ENCODE measurements at regions of chr1 and their contacts with region 1.

Region 1: DNA sequence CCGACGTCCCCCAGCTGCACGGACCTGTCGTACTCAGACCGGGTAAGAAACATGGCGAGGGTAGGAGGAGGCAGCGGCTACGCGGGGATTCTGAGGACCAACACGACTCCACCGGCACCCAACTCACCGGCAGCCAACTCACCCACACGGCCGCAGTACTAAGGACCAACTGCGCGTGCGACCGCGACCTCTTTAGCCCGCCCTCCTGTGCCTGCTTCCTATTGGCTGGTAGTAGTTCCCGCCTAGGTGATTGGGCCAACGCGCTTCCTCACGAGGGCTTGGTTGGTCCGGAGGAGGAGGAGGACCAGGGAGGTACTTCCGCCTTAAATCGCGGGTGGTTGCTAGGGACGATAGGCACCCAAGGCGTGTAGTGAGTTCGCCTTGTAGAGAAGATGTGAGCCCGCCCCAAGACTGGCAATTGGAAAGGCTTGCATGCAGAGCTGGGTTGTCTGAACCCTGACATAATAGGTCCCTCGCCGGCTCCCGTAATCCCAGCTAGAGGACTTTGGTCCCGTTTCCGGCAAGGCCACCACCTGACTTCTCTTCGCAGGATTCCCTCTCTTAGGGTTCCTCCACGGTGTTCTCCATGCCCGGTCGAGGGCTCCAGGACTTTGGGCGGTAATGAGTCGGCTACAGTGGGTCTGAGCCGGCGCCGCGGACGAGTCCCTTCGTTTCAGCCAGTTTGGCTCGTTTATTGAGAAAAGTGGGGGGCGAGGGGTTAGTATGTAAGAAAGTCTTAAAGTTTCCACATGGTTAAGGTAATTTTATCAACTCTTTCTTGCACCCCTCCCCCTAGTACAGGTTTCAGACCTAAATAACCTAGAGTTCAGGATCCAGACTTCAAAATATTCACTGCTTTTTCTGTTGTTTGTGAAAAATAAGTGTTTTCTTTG is at the start of gene PSMA5:
- DNase-seq: peak; percentile 97
- ATAC-seq: peak; percentile 95
- H3K4me3 ChIP-seq: peak within 1 kb of the TSS; percentile 72 to 98 (median 79)
- H3K4me3 Mint-ChIP-seq: peak within 1 kb of the TSS; percentile 98
- H3K27ac ChIP-seq: peak within 1 kb of the TSS; percentile 71 to 82
- H3K27ac Mint-ChIP-seq: peak within 1 kb of the TSS; percentile 98
- H3K4me1 ChIP-seq: peaks cover 13 to 19% of the 10 kb centered on the region in 2 donors
- H3K4me1 Mint-ChIP-seq: peaks cover 33% of the 10 kb centered on the region
- H3K27me3 ChIP-seq: no peaks in the 10 kb centered on the region
- H3K27me3 Mint-ChIP-seq: no peaks in the 10 kb centered on the region
- CTCF ChIP-seq: no peak
- total RNA-seq, gene PSMA5: 58.3 and 62.9 TPM in 2 replicates

Region 2: GRCh38 chr1:108963052-108963686 is 463.4 kb before region 1 on chr1 and contains the start of gene CLCC1:
- CTCF ChIA-PET with region 1: no interaction called
- POLR2A ChIA-PET with region 1: no interaction called
- intact Hi-C with region 1: loop called (anchors 2 kb)
- DNase-seq: peak; percentile 97
- ATAC-seq: peak; percentile 91
- H3K4me3 ChIP-seq: peak within 1 kb of the TSS; percentile 56 to 94 (median 76)
- H3K4me3 Mint-ChIP-seq: peak within 1 kb of the TSS; percentile 91
- H3K27ac ChIP-seq: peak within 1 kb of the TSS; percentile 86 to 94
- H3K27ac Mint-ChIP-seq: peak within 1 kb of the TSS; percentile 95
- H3K4me1 ChIP-seq: peaks cover 16 to 17% of the 10 kb centered on the region in 2 donors
- H3K4me1 Mint-ChIP-seq: peaks cover 30% of the 10 kb centered on the region
- H3K27me3 ChIP-seq: no peaks in the 10 kb centered on the region
- H3K27me3 Mint-ChIP-seq: no peaks in the 10 kb centered on the region
- CTCF ChIP-seq: no peak
- total RNA-seq, gene CLCC1: 26.9 and 29.5 TPM in 2 replicates

Region 3: DNA sequence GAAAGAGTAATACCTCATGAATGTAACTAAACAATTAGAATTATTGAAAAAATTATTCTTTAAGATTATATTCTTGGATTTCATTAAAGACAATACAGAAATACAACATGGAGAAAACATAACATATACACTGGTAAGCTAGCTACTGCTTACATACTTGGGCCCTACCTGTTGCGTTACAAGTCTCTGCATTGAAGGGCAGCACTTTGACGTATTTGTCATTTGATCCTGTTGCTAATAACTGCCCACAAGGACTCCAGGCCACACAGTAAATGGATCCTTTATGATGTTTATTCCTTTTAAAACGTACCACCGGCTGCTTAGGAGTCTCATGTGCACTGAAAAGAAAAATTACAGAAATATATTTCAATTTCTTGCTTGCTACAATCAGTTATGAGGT is 443.4 kb before region 1 on chr1:
- CTCF ChIA-PET with region 1: no interaction called
- POLR2A ChIA-PET with region 1: no interaction called
- intact Hi-C with region 1: no loop called
- DNase-seq: no peak
- ATAC-seq: no peak
- H3K4me3 ChIP-seq: no peak overlapping the region
- H3K4me3 Mint-ChIP-seq: no peak overlapping the region
- H3K27ac ChIP-seq: no peak overlapping the region
- H3K27ac Mint-ChIP-seq: no peak overlapping the region
- H3K4me1 ChIP-seq: no peaks in the 10 kb centered on the region
- H3K4me1 Mint-ChIP-seq: no peaks in the 10 kb centered on the region
- H3K27me3 ChIP-seq: no peaks in the 10 kb centered on the region
- H3K27me3 Mint-ChIP-seq: no peaks in the 10 kb centered on the region
- CTCF ChIP-seq: no peak

Region 4: GRCh38 chr1:109248797-109249642 is 177.5 kb before region 1 on chr1 and contains the start of gene CELSR2:
- CTCF ChIA-PET with region 1: no interaction called
- POLR2A ChIA-PET with region 1: no interaction called
- intact Hi-C with region 1: loop called (anchors 1 kb)
- DNase-seq: peak; percentile 70
- ATAC-seq: peak; percentile 88
- H3K4me3 ChIP-seq: peak within 1 kb of the TSS in 3 of 5 experiments; percentile 37 to 54 (median 46)
- H3K4me3 Mint-ChIP-seq: peak within 1 kb of the TSS; percentile 78
- H3K27ac ChIP-seq: no peak within 1 kb of the TSS
- H3K27ac Mint-ChIP-seq: no peak within 1 kb of the TSS
- H3K4me1 ChIP-seq: peaks cover 11 to 22% of the 10 kb centered on the region in 2 donors
- H3K4me1 Mint-ChIP-seq: peaks cover 11% of the 10 kb centered on the region
- H3K27me3 ChIP-seq: peaks cover 0 to 45% (median 14%) of the 10 kb centered on the region in 4 experiments
- H3K27me3 Mint-ChIP-seq: peaks cover 17% of the 10 kb centered on the region
- CTCF ChIP-seq: no peak
- total RNA-seq, gene CELSR2: 2.7 and 2.9 TPM in 2 replicates

Region 5: DNA sequence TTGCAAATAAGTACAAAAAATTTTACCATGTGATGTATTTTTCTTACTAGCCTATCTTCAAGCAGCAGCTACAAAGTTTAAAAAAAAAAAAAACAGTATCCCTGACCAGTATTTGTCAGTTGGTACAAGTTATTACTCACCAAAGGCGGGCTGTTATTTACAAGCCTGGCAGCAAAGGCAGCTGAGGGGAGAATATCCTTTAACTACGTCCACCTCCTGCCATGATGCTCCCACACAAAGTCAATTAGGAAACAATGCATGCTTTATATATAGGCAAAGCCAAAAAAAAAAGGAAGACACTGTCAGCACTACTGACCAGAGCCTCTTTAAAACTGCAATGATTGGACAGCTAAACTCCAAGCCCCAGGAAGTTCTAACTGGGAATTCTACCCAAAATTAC is 14.0 kb before region 1 on chr1:
- CTCF ChIA-PET with region 1: no interaction called
- POLR2A ChIA-PET with region 1: no interaction called
- intact Hi-C with region 1: no loop called
- DNase-seq: no peak
- ATAC-seq: no peak
- H3K4me3 ChIP-seq: no peak overlapping the region
- H3K4me3 Mint-ChIP-seq: no peak overlapping the region
- H3K27ac ChIP-seq: no peak overlapping the region
- H3K27ac Mint-ChIP-seq: no peak overlapping the region
- H3K4me1 ChIP-seq: no peaks in the 10 kb centered on the region
- H3K4me1 Mint-ChIP-seq: peaks cover 2% of the 10 kb centered on the region
- H3K27me3 ChIP-seq: no peaks in the 10 kb centered on the region
- H3K27me3 Mint-ChIP-seq: no peaks in the 10 kb centered on the region
- CTCF ChIP-seq: no peak

Region 6: DNA sequence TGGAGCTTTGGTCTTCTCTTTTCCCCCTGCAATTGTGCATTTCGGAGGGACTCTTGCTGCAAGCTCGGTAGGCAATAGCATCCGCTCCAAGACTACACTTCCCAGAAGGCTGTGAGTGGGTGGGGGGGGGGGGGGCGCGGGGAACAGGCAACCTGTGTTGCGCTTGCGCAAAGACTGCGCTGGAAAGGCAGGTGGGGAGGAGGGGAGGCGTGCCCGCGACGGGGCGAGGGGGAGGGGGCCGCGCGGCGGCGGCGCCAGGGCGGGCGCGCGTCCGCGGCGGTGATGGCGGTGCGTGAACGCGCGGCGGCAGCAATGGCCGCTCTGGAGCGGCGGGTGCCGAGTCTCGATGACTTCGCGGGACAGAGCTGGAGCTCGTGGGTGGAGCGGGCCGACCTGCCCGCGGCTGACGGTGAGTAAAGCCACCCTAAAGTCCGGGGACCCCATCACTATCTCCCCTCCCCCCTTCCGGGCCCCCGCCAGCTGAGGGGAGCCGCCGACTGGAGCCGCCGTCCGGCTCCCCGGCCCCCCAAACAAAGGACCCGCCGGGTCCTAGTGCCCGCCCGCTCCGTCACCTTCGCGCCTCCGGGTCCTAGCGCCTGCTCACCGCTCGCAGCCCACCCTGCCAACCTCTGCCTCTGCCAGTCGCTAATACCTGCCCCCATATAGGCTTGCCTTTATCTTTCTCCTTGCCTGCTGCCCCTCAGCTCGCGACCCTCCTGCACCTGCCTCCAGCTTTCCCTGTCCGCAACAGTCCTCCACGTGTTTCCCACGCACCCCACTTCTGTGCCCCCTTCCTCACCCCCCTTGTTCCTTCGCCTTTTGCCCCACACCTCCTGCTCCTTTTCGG is 57.4 kb after region 1 on chr1 and contains the start of gene ATXN7L2:
- CTCF ChIA-PET with region 1: interaction called, 8 read pairs
- POLR2A ChIA-PET with region 1: interaction called, 5 read pairs
- intact Hi-C with region 1: loop called (anchors 1 kb)
- DNase-seq: peak; percentile 96
- ATAC-seq: peak; percentile 77
- H3K4me3 ChIP-seq: peak within 1 kb of the TSS; percentile 51 to 82 (median 74)
- H3K4me3 Mint-ChIP-seq: peak within 1 kb of the TSS; percentile 96
- H3K27ac ChIP-seq: peak within 1 kb of the TSS; percentile 92 to 95
- H3K27ac Mint-ChIP-seq: peak within 1 kb of the TSS; percentile 88
- H3K4me1 ChIP-seq: peaks cover 12 to 23% of the 10 kb centered on the region in 2 donors
- H3K4me1 Mint-ChIP-seq: peaks cover 28% of the 10 kb centered on the region
- H3K27me3 ChIP-seq: peaks cover 0 to 15% (median 5%) of the 10 kb centered on the region in 4 experiments
- H3K27me3 Mint-ChIP-seq: peaks cover 20% of the 10 kb centered on the region
- CTCF ChIP-seq: no peak
- total RNA-seq, gene ATXN7L2: 10.1 and 10.9 TPM in 2 replicates

Region 7: DNA sequence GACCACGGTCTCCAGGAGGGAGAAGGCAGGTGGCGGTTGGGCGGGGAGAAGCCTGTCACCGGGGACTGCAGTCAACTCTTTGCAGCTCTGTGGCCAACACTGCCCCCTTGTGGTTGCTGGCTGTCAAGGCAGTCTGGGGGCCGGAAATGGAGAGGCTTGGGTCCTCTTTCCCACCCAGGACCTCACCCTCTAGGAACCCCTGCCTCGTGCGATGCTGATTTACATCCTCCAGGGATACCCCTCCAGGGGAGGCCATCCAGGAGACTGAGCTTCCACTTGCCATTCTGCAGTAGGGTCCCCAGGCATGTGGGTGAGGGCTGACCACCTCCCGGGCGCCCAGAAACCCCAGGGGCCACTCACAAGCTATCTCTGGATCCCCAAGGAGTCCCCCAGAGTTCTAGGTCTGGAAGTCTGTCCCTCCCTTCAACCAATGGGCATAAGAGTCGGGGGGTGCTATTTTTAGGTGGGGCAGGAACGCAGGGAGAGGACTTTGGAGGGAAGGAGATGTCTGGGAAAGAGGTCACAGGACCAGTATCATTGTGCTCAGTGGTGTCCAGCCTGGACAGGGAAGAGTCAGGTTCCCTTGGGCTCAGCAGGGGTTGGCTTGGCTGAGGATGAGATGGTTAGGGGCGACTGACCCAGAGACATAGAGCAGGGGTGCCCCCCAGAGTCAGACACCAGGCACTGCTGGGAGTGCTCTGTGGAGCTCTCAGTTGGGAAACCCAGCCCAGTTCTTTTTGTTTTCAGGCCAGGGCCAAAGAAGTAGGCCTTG is 106.0 kb after region 1 on chr1:
- CTCF ChIA-PET with region 1: interaction called, 25 read pairs
- POLR2A ChIA-PET with region 1: no interaction called
- intact Hi-C with region 1: loop called (anchors 1 kb)
- DNase-seq: peak; percentile 88
- ATAC-seq: peak; percentile 90
- H3K4me3 ChIP-seq: peak overlapping the region in 4 of 5 experiments; percentile 37 to 67 (median 52)
- H3K4me3 Mint-ChIP-seq: peak overlapping the region; percentile 90
- H3K27ac ChIP-seq: peak overlapping the region in 1 of 2 donors; percentile 21
- H3K27ac Mint-ChIP-seq: peak overlapping the region; percentile 87
- H3K4me1 ChIP-seq: peaks cover 4 to 11% of the 10 kb centered on the region in 2 donors
- H3K4me1 Mint-ChIP-seq: peaks cover 11% of the 10 kb centered on the region
- H3K27me3 ChIP-seq: no peaks in the 10 kb centered on the region
- H3K27me3 Mint-ChIP-seq: no peaks in the 10 kb centered on the region
- CTCF ChIP-seq: peak; percentile 93

Region 8: GRCh38 chr1:109655601-109656519 is 229.3 kb after region 1 on chr1 and contains the start of gene GSTM4:
- CTCF ChIA-PET with region 1: no interaction called
- POLR2A ChIA-PET with region 1: no interaction called
- intact Hi-C with region 1: no loop called
- DNase-seq: peak; percentile 90
- ATAC-seq: peak; percentile 96
- H3K4me3 ChIP-seq: peak within 1 kb of the TSS; percentile 45 to 97 (median 90)
- H3K4me3 Mint-ChIP-seq: peak within 1 kb of the TSS; percentile 96
- H3K27ac ChIP-seq: peak within 1 kb of the TSS; percentile 37 to 76
- H3K27ac Mint-ChIP-seq: peak within 1 kb of the TSS; percentile 93
- H3K4me1 ChIP-seq: peaks cover 11 to 17% of the 10 kb centered on the region in 2 donors
- H3K4me1 Mint-ChIP-seq: peaks cover 23% of the 10 kb centered on the region
- H3K27me3 ChIP-seq: peaks cover 0 to 6% (median 0%) of the 10 kb centered on the region in 4 experiments
- H3K27me3 Mint-ChIP-seq: peaks cover 20% of the 10 kb centered on the region
- CTCF ChIP-seq: no peak
- total RNA-seq, gene GSTM4: 28.6 and 39.4 TPM in 2 replicates

Region 9: DNA sequence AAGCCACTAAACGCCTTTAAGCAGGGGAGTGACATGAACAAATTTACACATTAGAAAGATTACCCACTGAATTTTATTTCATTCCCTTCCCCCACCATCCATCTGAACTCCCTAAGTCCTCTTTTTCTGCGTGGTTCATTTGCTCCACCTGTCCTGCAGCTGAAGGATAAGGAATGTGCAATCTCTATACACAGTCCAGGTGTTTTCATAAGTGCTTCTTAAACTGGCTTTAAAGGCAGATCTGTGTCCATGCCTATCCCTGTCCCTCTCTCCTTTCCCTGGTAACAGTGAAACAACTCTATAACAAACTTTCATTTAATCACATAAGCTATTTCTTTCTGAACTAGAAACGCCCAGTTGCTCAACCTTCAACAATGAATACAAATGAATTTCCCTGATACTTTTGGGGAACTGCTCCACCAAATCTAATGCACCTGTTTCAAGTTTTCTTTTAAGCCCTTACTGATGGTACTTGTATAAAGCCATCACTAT is 305.9 kb after region 1 on chr1:
- CTCF ChIA-PET with region 1: no interaction called
- POLR2A ChIA-PET with region 1: no interaction called
- intact Hi-C with region 1: no loop called
- DNase-seq: no peak
- ATAC-seq: no peak
- H3K4me3 ChIP-seq: no peak overlapping the region
- H3K4me3 Mint-ChIP-seq: no peak overlapping the region
- H3K27ac ChIP-seq: no peak overlapping the region
- H3K27ac Mint-ChIP-seq: no peak overlapping the region
- H3K4me1 ChIP-seq: no peaks in the 10 kb centered on the region
- H3K4me1 Mint-ChIP-seq: no peaks in the 10 kb centered on the region
- H3K27me3 ChIP-seq: peaks cover 0 to 3% (median under 1%) of the 10 kb centered on the region in 4 experiments
- H3K27me3 Mint-ChIP-seq: peaks cover 15% of the 10 kb centered on the region
- CTCF ChIP-seq: no peak

Measured in B cell (primary cell).